Prostate gland (tissue), 2 donors: ENCODE measurements at regions of chr19 and their contacts with region 1.

Region 1: DNA sequence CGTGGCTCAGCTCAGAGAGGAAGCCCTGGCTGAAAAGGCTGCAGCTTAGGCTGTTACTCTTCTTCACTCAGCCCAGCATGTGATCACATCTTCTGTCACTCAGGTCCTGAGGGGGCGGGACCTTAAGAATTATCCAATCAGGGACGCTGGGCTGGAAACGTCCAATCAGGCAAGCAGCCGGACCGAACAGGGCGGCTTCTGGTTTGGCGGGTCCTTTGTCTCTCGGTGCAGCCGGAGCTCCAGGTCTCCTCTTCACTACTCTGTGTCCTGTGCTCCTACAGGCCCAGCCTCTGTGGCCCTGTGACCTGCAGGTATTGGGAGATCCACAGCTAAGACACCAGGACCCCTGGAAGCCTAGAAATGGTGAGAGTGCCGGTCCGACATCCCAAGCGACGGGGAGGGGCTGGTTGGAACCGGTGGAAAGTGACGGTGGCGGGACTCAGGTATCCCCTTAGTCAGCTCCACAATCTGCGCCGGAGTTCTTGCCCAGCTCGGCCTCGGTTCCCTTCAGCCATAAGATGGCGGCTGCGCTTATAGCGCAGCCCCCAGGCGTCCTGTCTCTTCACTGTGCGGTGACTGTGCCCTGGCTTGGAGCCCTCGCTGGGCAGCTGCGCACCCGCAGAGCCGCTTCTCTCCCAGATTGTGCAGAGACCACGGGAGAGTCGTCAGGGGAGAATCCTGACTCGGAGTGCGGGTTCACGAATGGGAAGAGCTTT is at the start of gene ZNF93:
- DNase-seq: peak; percentile 97
- H3K4me3 ChIP-seq: peak within 1 kb of the TSS; percentile 43 to 62
- H3K27ac ChIP-seq: peak within 1 kb of the TSS; percentile 88 to 89
- H3K4me1 ChIP-seq: no peaks in the 10 kb centered on the region
- H3K27me3 ChIP-seq: no peaks in the 10 kb centered on the region
- CTCF ChIP-seq: peak in 1 of 4 experiments; percentile 5
- POLR2A ChIP-seq: peak; percentile 73
- total RNA-seq, gene ZNF93: 6.1 to 7.6 TPM

Region 2: DNA sequence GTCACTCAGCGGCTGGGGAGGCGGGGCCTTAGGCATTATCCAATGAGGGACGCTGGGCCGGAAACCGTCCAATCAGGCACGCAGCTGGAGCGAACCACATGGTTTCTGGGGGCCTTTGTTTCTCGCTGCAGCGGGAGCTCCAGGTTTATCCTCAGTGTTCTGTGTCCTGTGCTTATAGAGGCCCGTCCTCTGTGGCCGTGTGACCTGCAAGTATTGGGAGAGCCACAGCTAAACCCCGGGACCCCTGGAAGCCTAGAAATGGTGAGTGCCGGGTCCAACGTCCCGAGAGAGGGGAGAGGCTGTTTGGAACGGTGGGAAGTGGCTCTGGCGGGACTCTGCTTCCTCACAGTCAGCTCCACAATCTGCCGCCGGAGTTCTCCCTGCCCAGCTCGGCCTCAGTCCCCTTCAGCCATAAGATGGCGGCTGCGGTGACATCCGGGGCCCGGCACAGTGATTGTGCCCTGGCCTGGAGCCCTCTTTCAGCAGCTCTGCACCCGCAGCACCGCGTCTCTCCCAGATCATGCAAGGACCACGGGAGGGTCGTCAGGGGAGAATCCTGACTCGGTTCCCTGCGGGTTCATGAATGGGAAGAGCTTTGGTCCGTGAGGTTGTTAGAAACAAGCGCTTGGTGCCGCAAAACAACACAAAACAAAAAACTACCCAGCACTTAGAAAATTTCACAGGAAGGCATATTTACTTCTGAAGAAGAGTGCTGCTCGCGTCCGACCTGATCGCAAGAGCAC is 35.0 kb before region 1 on chr19 and contains the start of gene ZNF253:
- intact Hi-C with region 1: loop called (anchors 2 kb)
- DNase-seq: peak; percentile 98
- H3K4me3 ChIP-seq: peak within 1 kb of the TSS; percentile 59 to 66
- H3K27ac ChIP-seq: peak within 1 kb of the TSS; percentile 92 to 95
- H3K4me1 ChIP-seq: no peaks in the 10 kb centered on the region
- H3K27me3 ChIP-seq: no peaks in the 10 kb centered on the region
- CTCF ChIP-seq: no peak
- POLR2A ChIP-seq: peak; percentile 83
- total RNA-seq, gene ZNF253: 10.6 to 20.0 TPM

Region 3: GRCh38 chr19:19937403-19937802 is 36.5 kb after region 1 on chr19:
- intact Hi-C with region 1: no loop called
- DNase-seq: no peak
- H3K4me3 ChIP-seq: no peak overlapping the region
- H3K27ac ChIP-seq: no peak overlapping the region
- H3K4me1 ChIP-seq: no peaks in the 10 kb centered on the region
- H3K27me3 ChIP-seq: no peaks in the 10 kb centered on the region
- CTCF ChIP-seq: no peak
- POLR2A ChIP-seq: no peak